ENCODE measurements at regions of chr20 and their contacts with region 1.

Region 1: GRCh38 chr20:5056801-5057599 is 55.7 kb upstream of the SLC23A2 start:
- DNase-seq: peak; percentile 69
- H3K4me3 Mint-ChIP-seq: no peak overlapping the region
- H3K27ac Mint-ChIP-seq: peak overlapping the region; percentile 87
- H3K4me1 Mint-ChIP-seq: peaks cover 21% of the 10 kb centered on the region
- H3K27me3 Mint-ChIP-seq: no peaks in the 10 kb centered on the region

Region 2: GRCh38 chr20:3811467-3812258 is 1245.3 kb before region 1 on chr20:
- intact Hi-C with region 1: no loop called
- DNase-seq: peak; percentile 81
- H3K4me3 Mint-ChIP-seq: peak overlapping the region; percentile 74
- H3K27ac Mint-ChIP-seq: peak overlapping the region; percentile 99
- H3K4me1 Mint-ChIP-seq: peaks cover 58% of the 10 kb centered on the region
- H3K27me3 Mint-ChIP-seq: no peaks in the 10 kb centered on the region

Region 3: DNA sequence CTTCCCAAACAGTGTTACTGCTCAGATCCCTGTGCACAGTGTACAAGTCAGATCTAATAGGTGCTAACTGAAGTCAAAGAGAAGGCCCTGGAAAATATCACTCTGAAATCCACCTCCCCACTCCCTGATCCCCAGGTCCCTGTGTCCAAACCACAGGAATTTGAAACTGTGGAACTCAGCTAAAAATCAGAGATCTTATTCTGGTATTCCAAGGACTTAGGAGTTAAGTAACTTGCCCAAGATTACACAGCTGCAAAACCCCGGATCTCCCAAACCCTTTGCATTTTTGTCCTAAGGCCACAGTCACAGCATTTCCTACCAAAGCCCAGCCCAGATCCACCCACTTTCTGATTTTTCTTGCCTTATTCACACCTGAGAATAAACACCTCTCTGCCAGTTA is 23.4 kb before region 1 on chr20:
- intact Hi-C with region 1: no loop called
- DNase-seq: no peak
- H3K4me3 Mint-ChIP-seq: no peak overlapping the region
- H3K27ac Mint-ChIP-seq: no peak overlapping the region
- H3K4me1 Mint-ChIP-seq: no peaks in the 10 kb centered on the region
- H3K27me3 Mint-ChIP-seq: peaks cover 6% of the 10 kb centered on the region

Region 4: GRCh38 chr20:5046656-5047339 is 10.2 kb before region 1 on chr20:
- intact Hi-C with region 1: no loop called
- DNase-seq: no peak
- H3K4me3 Mint-ChIP-seq: no peak overlapping the region
- H3K27ac Mint-ChIP-seq: no peak overlapping the region
- H3K4me1 Mint-ChIP-seq: peaks cover 2% of the 10 kb centered on the region
- H3K27me3 Mint-ChIP-seq: peaks cover 15% of the 10 kb centered on the region

Region 5: GRCh38 chr20:5100684-5101347 is 43.8 kb after region 1 on chr20:
- intact Hi-C with region 1: loop called (anchors 1 kb)
- DNase-seq: peak; percentile 55
- H3K4me3 Mint-ChIP-seq: no peak overlapping the region
- H3K27ac Mint-ChIP-seq: no peak overlapping the region
- H3K4me1 Mint-ChIP-seq: peaks cover 4% of the 10 kb centered on the region
- H3K27me3 Mint-ChIP-seq: no peaks in the 10 kb centered on the region